ENCODE measurements at regions of chr6 and their contacts with region 1.

Region 1: GRCh38 chr6:157756708-157757429 is 66.2 kb upstream of the SNX9 start:
- DNase-seq: peak; percentile 91
- ATAC-seq: peak; percentile 23
- H3K4me3 Mint-ChIP-seq: peak overlapping the region; percentile 48
- H3K27ac Mint-ChIP-seq: peak overlapping the region; percentile 87
- H3K4me1 Mint-ChIP-seq: peaks cover 94% of the 10 kb centered on the region
- H3K27me3 Mint-ChIP-seq: peaks cover 5% of the 10 kb centered on the region

Region 2: GRCh38 chr6:157620566-157621343 is 136.1 kb before region 1 on chr6:
- CTCF ChIA-PET with region 1: no interaction called
- POLR2A ChIA-PET with region 1: no interaction called
- intact Hi-C with region 1: no loop called
- DNase-seq: no peak
- ATAC-seq: no peak
- H3K4me3 Mint-ChIP-seq: no peak overlapping the region
- H3K27ac Mint-ChIP-seq: no peak overlapping the region
- H3K4me1 Mint-ChIP-seq: no peaks in the 10 kb centered on the region
- H3K27me3 Mint-ChIP-seq: no peaks in the 10 kb centered on the region

Region 3: GRCh38 chr6:157823001-157823527 is 66.2 kb after region 1 on chr6 and contains the start of gene SNX9:
- CTCF ChIA-PET with region 1: interaction called, 13 read pairs
- POLR2A ChIA-PET with region 1: interaction called, 5 read pairs
- intact Hi-C with region 1: loop called in 1 of 2 experiments (anchors 1 kb)
- DNase-seq: peak; percentile 84
- ATAC-seq: peak; percentile 59
- H3K4me3 Mint-ChIP-seq: peak within 1 kb of the TSS; percentile 92
- H3K27ac Mint-ChIP-seq: peak within 1 kb of the TSS; percentile 99
- H3K4me1 Mint-ChIP-seq: peaks cover 48% of the 10 kb centered on the region
- H3K27me3 Mint-ChIP-seq: peaks cover 11% of the 10 kb centered on the region
- total RNA-seq, gene SNX9: 39.4 to 43.3 TPM

Region 4: GRCh38 chr6:157845493-157846259 is 88.8 kb after region 1 on chr6:
- CTCF ChIA-PET with region 1: interaction called, 10 read pairs
- POLR2A ChIA-PET with region 1: interaction called, 3 read pairs
- intact Hi-C with region 1: loop called in 1 of 2 experiments (anchors 2 kb)
- DNase-seq: no peak
- ATAC-seq: peak; percentile 72
- H3K4me3 Mint-ChIP-seq: no peak overlapping the region
- H3K27ac Mint-ChIP-seq: peak overlapping the region; percentile 72
- H3K4me1 Mint-ChIP-seq: peaks cover 93% of the 10 kb centered on the region
- H3K27me3 Mint-ChIP-seq: no peaks in the 10 kb centered on the region

Region 5: DNA sequence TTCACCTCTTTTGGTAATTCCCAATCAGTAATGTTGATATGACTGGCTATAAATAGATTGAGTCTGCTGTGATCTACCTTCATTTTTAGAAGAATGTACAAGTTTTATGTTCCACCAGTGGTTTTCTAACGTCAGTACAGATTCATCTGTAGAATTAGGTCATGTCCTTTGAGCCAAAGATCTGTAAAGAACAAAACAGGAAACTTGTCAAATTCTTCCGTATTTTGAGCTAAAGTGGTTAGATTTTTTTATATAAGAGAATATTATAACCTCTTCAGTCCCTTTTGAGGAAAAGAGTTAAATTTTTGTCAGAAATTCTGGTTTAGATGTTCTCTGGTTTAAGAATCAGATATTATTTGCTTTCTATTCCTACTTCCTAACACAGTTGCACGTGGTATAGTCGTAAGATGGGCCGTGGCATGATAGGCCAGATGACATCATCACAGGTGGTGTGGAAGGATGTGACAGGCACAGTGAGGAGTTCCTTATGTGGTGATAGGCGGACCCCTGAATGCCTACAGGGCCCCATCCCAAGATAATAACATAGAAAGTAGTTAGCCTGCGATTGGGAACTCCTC is 128.4 kb after region 1 on chr6:
- CTCF ChIA-PET with region 1: interaction called, 12 read pairs
- POLR2A ChIA-PET with region 1: interaction called, 5 read pairs
- intact Hi-C with region 1: loop called in 1 of 2 experiments (anchors 2 kb)
- DNase-seq: peak; percentile 78
- ATAC-seq: peak; percentile 89
- H3K4me3 Mint-ChIP-seq: peak overlapping the region; percentile 17
- H3K27ac Mint-ChIP-seq: peak overlapping the region; percentile 92
- H3K4me1 Mint-ChIP-seq: peaks cover 76% of the 10 kb centered on the region
- H3K27me3 Mint-ChIP-seq: no peaks in the 10 kb centered on the region